Common myeloid progenitor, CD34-positive (primary cell): ENCODE measurements at regions of chr7 and their contacts with region 1.

Region 1: DNA sequence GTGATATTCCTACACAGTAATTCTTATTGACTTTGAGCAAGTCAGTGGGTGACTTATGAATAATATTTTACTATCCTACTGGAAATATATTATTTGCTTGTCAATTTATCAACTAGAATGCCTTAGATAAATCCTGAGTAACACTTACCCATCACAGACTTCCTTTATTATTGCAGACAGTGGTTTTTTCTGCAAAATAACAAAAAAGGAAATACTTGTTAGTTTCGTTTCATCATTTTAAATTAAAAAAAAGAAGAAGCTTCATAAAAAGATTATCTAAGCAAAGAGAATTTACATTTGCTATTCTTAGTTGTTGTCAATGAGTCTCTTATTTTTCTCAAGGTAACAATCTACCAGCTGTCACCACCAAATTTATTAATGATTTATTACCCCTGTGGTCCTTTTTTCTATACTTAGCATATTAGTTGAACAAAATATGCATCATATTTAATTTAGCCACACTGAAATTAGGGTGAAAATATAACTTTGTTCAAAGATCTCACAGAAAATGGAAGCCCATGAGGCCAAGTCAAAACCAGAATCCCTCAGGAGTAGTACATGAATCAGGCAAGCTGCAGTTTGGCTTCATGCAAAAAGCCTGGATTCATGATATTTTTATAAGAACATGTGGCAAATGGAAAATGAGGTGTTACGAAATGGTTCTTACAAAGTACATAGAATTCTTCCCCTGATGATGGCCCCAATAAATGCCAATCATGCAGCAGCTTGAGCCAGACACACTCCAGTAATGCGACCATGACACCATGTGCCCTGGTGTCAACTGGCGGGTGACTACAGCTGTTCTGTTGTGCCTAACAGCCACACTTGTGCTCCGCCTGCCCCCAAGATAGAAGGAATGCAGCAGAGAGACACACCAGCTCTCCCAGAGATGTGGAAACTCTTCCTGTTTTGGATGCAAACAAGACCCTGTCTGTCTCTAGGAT is 132.6 kb downstream of the ELMO1 start:
- DNase-seq: peak in 2 of 3 donors; percentile 38 to 41
- H3K4me3 ChIP-seq: no peak overlapping the region
- H3K27ac ChIP-seq: peak overlapping the region in 1 of 2 experiments; percentile 2
- H3K4me1 ChIP-seq: peaks cover 16 to 50% (median 31%) of the 10 kb centered on the region in 4 experiments
- H3K27me3 ChIP-seq: no peaks in the 10 kb centered on the region

Region 2: GRCh38 chr7:37193087-37193774 is 122.8 kb before region 1 on chr7:
- CTCF ChIA-PET with region 1: no interaction called
- POLR2A ChIA-PET with region 1: no interaction called
- DNase-seq: peak in 2 of 3 donors; percentile 32 to 34
- H3K4me3 ChIP-seq: no peak overlapping the region
- H3K27ac ChIP-seq: no peak overlapping the region
- H3K4me1 ChIP-seq: peaks cover 0 to 17% (median 12%) of the 10 kb centered on the region in 4 experiments
- H3K27me3 ChIP-seq: no peaks in the 10 kb centered on the region

Region 3: GRCh38 chr7:37342688-37343471 is 26.8 kb after region 1 on chr7:
- CTCF ChIA-PET with region 1: interaction called, 87 read pairs
- POLR2A ChIA-PET with region 1: no interaction called
- DNase-seq: peak; percentile 94 to 97 (median 95)
- H3K4me3 ChIP-seq: peak overlapping the region; percentile 18 to 97 (median 87)
- H3K27ac ChIP-seq: peak overlapping the region; percentile 91 to 93
- H3K4me1 ChIP-seq: peaks cover 42 to 94% (median 64%) of the 10 kb centered on the region in 4 experiments
- H3K27me3 ChIP-seq: no peaks in the 10 kb centered on the region